CD8-positive, alpha-beta T cell (primary cell): ENCODE measurements at regions of chr5 and their contacts with region 1.

Region 1: GRCh38 chr5:142699184-142699720 is 13.4 kb upstream of the FGF1 start:
- DNase-seq: peak; percentile 53 to 83 (median 74)
- ATAC-seq: peak; percentile 91
- H3K4me3 ChIP-seq: no peak overlapping the region
- H3K4me3 Mint-ChIP-seq: no peak overlapping the region
- H3K27ac ChIP-seq: no peak overlapping the region
- H3K27ac Mint-ChIP-seq: no peak overlapping the region
- H3K4me1 ChIP-seq: no peaks in the 10 kb centered on the region
- H3K4me1 Mint-ChIP-seq: no peaks in the 10 kb centered on the region
- H3K27me3 ChIP-seq: no peaks in the 10 kb centered on the region
- H3K27me3 Mint-ChIP-seq: no peaks in the 10 kb centered on the region
- CTCF ChIP-seq: peak; percentile 84

Region 2: DNA sequence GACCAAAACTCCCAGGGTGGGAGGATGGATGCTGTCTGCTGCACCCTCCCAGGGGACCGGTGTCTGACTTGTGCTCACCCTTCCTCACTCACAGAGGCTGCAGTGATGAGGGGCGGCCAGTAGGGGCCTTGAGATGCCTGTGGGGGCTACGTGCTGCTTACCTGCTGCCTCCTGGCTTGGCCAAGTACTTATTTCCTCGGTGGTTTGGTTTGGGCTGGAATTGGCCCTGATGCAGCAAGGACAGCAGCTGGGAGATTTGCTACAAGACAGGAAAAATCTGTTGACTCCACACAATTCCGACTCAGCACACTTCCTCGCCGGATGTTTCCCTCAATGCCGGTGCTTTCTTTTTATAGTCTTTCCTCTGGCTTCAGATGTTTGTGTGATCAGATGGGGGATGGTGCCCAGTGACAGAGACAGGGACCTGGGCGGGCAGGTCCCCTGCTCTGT is 747.9 kb before region 1 on chr5:
- CTCF ChIA-PET with region 1: no interaction called
- POLR2A ChIA-PET with region 1: no interaction called
- intact Hi-C with region 1: no loop called
- DNase-seq: peak in 4 of 9 experiments; percentile 34 to 58 (median 44)
- ATAC-seq: peak; percentile 91
- H3K4me3 ChIP-seq: no peak overlapping the region
- H3K4me3 Mint-ChIP-seq: peak overlapping the region; percentile 54
- H3K27ac ChIP-seq: no peak overlapping the region
- H3K27ac Mint-ChIP-seq: no peak overlapping the region
- H3K4me1 ChIP-seq: no peaks in the 10 kb centered on the region
- H3K4me1 Mint-ChIP-seq: peaks cover 11% of the 10 kb centered on the region
- H3K27me3 ChIP-seq: no peaks in the 10 kb centered on the region
- H3K27me3 Mint-ChIP-seq: no peaks in the 10 kb centered on the region
- CTCF ChIP-seq: peak; percentile 49

Region 3: GRCh38 chr5:142145106-142145900 is 553.9 kb before region 1 on chr5:
- CTCF ChIA-PET with region 1: interaction called, 10 read pairs
- POLR2A ChIA-PET with region 1: no interaction called
- intact Hi-C with region 1: no loop called
- DNase-seq: peak; percentile 18 to 76 (median 61)
- ATAC-seq: peak; percentile 78
- H3K4me3 ChIP-seq: no peak overlapping the region
- H3K4me3 Mint-ChIP-seq: no peak overlapping the region
- H3K27ac ChIP-seq: no peak overlapping the region
- H3K27ac Mint-ChIP-seq: no peak overlapping the region
- H3K4me1 ChIP-seq: no peaks in the 10 kb centered on the region
- H3K4me1 Mint-ChIP-seq: peaks cover 13% of the 10 kb centered on the region
- H3K27me3 ChIP-seq: no peaks in the 10 kb centered on the region
- H3K27me3 Mint-ChIP-seq: no peaks in the 10 kb centered on the region
- CTCF ChIP-seq: peak; percentile 63

Region 4: GRCh38 chr5:142611154-142611553 is 88.1 kb before region 1 on chr5:
- CTCF ChIA-PET with region 1: interaction called, 4 read pairs
- POLR2A ChIA-PET with region 1: no interaction called
- intact Hi-C with region 1: loop called (anchors 1 kb)
- DNase-seq: peak; percentile 30 to 73 (median 60)
- ATAC-seq: peak; percentile 89
- H3K4me3 ChIP-seq: no peak overlapping the region
- H3K4me3 Mint-ChIP-seq: no peak overlapping the region
- H3K27ac ChIP-seq: no peak overlapping the region
- H3K27ac Mint-ChIP-seq: no peak overlapping the region
- H3K4me1 ChIP-seq: no peaks in the 10 kb centered on the region
- H3K4me1 Mint-ChIP-seq: peaks cover 3% of the 10 kb centered on the region
- H3K27me3 ChIP-seq: no peaks in the 10 kb centered on the region
- H3K27me3 Mint-ChIP-seq: peaks cover 9% of the 10 kb centered on the region
- CTCF ChIP-seq: peak; percentile 81

Region 5: DNA sequence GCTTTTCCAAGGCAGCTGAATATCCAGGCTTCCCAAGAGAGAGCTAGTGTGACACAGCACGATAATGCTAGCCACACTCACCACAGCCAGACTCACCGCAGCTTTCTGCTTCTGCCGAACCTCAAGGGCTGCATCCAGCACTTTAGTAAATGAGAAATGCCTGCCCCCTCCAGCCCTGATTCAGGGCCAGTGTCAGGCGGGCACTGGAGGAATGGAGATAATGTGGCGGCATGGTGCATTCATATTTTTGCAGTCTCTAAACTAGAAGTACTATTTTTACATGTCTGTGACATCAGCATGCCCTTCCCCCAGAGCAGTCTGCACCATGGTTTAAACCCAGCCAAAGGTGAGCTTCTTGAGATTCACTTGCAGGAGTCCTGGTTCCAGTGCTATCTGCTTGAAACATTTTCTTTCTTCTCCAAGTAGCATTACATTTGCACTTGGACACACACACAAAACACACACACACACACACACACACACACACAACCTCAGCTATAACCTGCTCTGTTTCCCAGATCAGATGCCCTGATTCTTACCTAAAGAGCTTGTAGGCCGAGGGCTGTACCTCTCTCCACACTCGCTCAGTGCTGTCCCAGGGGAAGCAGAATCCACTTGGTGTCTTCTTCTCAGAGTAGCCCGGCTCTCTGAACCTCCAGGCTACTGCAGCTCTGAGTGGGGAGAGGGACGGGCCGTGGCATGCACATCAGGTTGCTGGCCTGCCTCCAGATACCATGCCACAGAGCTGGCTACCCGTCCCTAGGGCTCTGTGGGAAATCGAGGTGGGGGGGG is 13.6 kb before region 1 on chr5 and contains the start of gene FGF1:
- CTCF ChIA-PET with region 1: interaction called, 11 read pairs
- POLR2A ChIA-PET with region 1: no interaction called
- intact Hi-C with region 1: no loop called
- DNase-seq: no peak
- ATAC-seq: no peak
- H3K4me3 ChIP-seq: no peak within 1 kb of the TSS
- H3K4me3 Mint-ChIP-seq: no peak within 1 kb of the TSS
- H3K27ac ChIP-seq: no peak within 1 kb of the TSS
- H3K27ac Mint-ChIP-seq: no peak within 1 kb of the TSS
- H3K4me1 ChIP-seq: no peaks in the 10 kb centered on the region
- H3K4me1 Mint-ChIP-seq: no peaks in the 10 kb centered on the region
- H3K27me3 ChIP-seq: peaks cover 0 to 2% of the 10 kb centered on the region in 2 experiments
- H3K27me3 Mint-ChIP-seq: peaks cover 4% of the 10 kb centered on the region
- CTCF ChIP-seq: no peak
- total RNA-seq, gene FGF1: not detected

Region 6: DNA sequence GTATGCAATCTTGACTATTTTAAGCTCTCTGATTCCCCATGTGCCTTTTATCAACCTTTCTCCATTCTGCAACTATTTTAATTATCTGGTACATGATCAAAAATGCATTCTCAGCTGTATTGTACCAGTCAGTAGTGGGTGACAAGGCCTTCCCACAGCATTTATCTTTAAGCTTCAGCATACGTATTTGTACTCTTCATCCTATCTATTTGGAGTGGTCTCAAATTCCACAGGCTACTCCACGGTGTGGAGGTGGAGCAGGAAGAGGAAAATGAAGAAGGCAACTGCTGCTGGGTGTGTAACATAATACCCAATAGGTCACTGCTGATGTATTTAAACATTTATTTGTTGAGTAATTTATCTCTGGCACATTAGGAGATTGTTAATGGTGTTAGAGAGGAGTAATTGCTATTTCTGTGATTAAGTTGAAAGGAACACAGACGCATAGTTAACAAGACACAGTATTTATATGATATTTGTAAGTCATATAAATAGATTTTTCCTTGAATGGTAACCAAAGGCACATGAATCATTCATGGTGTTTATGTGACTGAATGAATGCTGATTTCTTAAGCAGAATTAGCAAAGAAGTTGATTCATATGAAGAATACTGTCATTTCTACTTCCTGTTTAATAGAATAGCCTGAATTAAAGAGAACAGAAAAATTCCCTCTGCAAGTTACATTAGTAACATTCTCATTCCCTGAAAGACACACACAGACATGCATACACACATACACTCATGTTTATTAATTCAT is 858.0 kb after region 1 on chr5:
- CTCF ChIA-PET with region 1: no interaction called
- POLR2A ChIA-PET with region 1: no interaction called
- intact Hi-C with region 1: no loop called
- DNase-seq: no peak
- ATAC-seq: no peak
- H3K4me3 ChIP-seq: no peak overlapping the region
- H3K4me3 Mint-ChIP-seq: no peak overlapping the region
- H3K27ac ChIP-seq: no peak overlapping the region
- H3K27ac Mint-ChIP-seq: no peak overlapping the region
- H3K4me1 ChIP-seq: no peaks in the 10 kb centered on the region
- H3K4me1 Mint-ChIP-seq: no peaks in the 10 kb centered on the region
- H3K27me3 ChIP-seq: no peaks in the 10 kb centered on the region
- H3K27me3 Mint-ChIP-seq: no peaks in the 10 kb centered on the region
- CTCF ChIP-seq: no peak